CD8-positive, alpha-beta T cell (primary cell): ENCODE measurements at regions of chr17 and their contacts with region 1.

Region 1: DNA sequence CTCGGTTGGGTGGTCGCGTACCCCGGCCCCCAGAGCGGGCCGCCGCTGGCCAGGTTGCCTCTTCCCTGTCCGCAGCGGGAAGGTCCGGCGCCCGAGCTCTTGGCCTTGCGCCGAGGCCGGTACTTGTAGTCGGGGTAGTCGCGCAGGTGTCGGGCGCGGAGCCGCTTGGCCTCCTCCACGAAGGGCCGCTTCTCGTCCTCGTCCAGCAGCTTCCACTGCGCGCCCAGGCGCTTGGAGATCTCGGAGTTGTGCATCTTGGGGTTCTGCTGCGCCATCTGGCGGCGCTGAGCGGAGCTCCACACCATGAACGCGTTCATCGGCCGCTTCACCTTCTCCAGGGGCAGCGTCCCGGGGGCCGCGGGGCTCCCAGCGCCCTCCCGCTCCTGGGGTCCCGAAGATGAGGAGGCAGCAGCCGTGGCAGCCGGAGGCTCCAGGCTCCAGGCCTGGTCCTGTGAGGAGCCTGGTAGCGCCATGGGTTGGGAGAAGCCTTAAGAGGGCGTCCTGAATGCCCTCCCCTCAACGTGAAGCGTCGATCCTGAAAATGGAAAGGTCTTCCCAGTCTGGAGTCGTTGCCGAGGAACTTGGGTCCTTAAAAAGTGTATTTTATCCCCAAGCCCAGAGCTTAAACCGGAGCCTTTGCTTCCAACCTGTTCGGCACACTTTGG is 558 bp downstream of the SOX15 start:
- DNase-seq: peak; percentile 40 to 81 (median 68)
- ATAC-seq: peak; percentile 89
- H3K4me3 ChIP-seq: no peak overlapping the region
- H3K4me3 Mint-ChIP-seq: no peak overlapping the region
- H3K27ac ChIP-seq: no peak overlapping the region
- H3K27ac Mint-ChIP-seq: peak overlapping the region; percentile 41
- H3K4me1 ChIP-seq: peaks cover 14% of the 10 kb centered on the region
- H3K4me1 Mint-ChIP-seq: peaks cover 12% of the 10 kb centered on the region
- H3K27me3 ChIP-seq: no peaks in the 10 kb centered on the region
- H3K27me3 Mint-ChIP-seq: no peaks in the 10 kb centered on the region
- CTCF ChIP-seq: peak; percentile 61

Region 2: GRCh38 chr17:7523033-7523432 is 66.3 kb before region 1 on chr17:
- CTCF ChIA-PET with region 1: interaction called, 10 read pairs
- POLR2A ChIA-PET with region 1: no interaction called
- intact Hi-C with region 1: loop called (anchors 1 to 2 kb)
- DNase-seq: peak in 8 of 9 experiments; percentile 16 to 73 (median 56)
- ATAC-seq: peak; percentile 75
- H3K4me3 ChIP-seq: no peak overlapping the region
- H3K4me3 Mint-ChIP-seq: no peak overlapping the region
- H3K27ac ChIP-seq: no peak overlapping the region
- H3K27ac Mint-ChIP-seq: no peak overlapping the region
- H3K4me1 ChIP-seq: no peaks in the 10 kb centered on the region
- H3K4me1 Mint-ChIP-seq: peaks cover 3% of the 10 kb centered on the region
- H3K27me3 ChIP-seq: no peaks in the 10 kb centered on the region
- H3K27me3 Mint-ChIP-seq: no peaks in the 10 kb centered on the region
- CTCF ChIP-seq: peak; percentile 66

Region 3: GRCh38 chr17:7606280-7606679 is 16.9 kb after region 1 on chr17:
- CTCF ChIA-PET with region 1: interaction called, 12 read pairs
- POLR2A ChIA-PET with region 1: interaction called, 5 read pairs
- intact Hi-C with region 1: no loop called
- DNase-seq: no peak
- ATAC-seq: no peak
- H3K4me3 ChIP-seq: no peak overlapping the region
- H3K4me3 Mint-ChIP-seq: no peak overlapping the region
- H3K27ac ChIP-seq: no peak overlapping the region
- H3K27ac Mint-ChIP-seq: no peak overlapping the region
- H3K4me1 ChIP-seq: no peaks in the 10 kb centered on the region
- H3K4me1 Mint-ChIP-seq: peaks cover 26% of the 10 kb centered on the region
- H3K27me3 ChIP-seq: no peaks in the 10 kb centered on the region
- H3K27me3 Mint-ChIP-seq: no peaks in the 10 kb centered on the region
- CTCF ChIP-seq: no peak

Region 4: GRCh38 chr17:7823581-7824397 is 234.5 kb after region 1 on chr17:
- CTCF ChIA-PET with region 1: no interaction called
- POLR2A ChIA-PET with region 1: no interaction called
- intact Hi-C with region 1: no loop called
- DNase-seq: no peak
- ATAC-seq: no peak
- H3K4me3 ChIP-seq: no peak overlapping the region
- H3K4me3 Mint-ChIP-seq: no peak overlapping the region
- H3K27ac ChIP-seq: no peak overlapping the region
- H3K27ac Mint-ChIP-seq: no peak overlapping the region
- H3K4me1 ChIP-seq: no peaks in the 10 kb centered on the region
- H3K4me1 Mint-ChIP-seq: no peaks in the 10 kb centered on the region
- H3K27me3 ChIP-seq: no peaks in the 10 kb centered on the region
- H3K27me3 Mint-ChIP-seq: no peaks in the 10 kb centered on the region
- CTCF ChIP-seq: no peak